Left ventricle myocardium superior (tissue), 1 donor: ENCODE measurements at regions of chr5 and their contacts with region 1.

Region 1: DNA sequence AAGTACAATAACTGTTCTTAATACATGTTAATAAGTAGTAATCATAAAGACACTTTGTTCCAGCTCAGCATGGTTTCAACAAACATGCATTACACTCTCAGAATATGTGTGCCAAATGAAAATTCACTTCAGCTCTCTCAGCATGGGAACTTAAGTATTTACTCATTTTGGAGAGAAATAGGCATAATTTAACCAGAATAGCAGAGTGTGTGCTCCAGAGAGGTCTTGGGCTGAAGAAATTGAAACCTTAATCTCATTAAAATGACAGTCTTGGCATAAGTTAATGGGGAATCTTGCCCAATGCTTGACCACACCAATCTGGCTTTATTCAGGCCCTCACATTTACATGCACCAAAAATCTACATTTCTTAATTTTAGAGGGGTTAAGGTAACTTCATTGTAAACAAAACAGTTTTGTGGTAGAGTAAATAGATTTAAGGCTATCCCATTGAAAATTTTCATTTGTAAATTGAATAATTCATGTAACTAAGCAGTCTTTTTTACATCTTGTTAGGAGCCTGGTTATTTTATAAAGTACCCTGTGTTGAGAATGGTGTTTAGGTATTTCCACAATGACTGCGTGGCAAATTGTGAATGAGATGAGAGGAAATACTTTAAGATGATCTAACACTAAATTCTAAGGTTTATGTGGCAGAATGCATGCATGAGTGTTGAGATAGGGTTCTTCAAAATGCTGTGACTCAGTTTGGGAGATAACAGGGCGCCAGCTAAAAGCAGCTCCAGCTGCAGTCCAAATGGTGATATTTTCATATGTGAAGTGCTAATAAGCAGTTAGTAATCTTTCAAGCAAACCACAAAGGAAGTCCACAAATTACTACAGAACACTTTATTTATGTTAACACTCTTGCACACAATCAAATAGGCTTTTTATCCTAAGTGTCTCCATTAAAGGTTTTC is 11.3 kb upstream of the LOX start:
- DNase-seq: no peak
- ATAC-seq: peak; percentile 80

Region 2: GRCh38 chr5:121976979-121977378 is 112.4 kb before region 1 on chr5:
- intact Hi-C with region 1: loop called (anchors 10 kb)
- DNase-seq: no peak
- ATAC-seq: no peak